Sigmoid colon (tissue), 7 donors: ENCODE measurements at regions of chr5 and their contacts with region 1.

Region 1: DNA sequence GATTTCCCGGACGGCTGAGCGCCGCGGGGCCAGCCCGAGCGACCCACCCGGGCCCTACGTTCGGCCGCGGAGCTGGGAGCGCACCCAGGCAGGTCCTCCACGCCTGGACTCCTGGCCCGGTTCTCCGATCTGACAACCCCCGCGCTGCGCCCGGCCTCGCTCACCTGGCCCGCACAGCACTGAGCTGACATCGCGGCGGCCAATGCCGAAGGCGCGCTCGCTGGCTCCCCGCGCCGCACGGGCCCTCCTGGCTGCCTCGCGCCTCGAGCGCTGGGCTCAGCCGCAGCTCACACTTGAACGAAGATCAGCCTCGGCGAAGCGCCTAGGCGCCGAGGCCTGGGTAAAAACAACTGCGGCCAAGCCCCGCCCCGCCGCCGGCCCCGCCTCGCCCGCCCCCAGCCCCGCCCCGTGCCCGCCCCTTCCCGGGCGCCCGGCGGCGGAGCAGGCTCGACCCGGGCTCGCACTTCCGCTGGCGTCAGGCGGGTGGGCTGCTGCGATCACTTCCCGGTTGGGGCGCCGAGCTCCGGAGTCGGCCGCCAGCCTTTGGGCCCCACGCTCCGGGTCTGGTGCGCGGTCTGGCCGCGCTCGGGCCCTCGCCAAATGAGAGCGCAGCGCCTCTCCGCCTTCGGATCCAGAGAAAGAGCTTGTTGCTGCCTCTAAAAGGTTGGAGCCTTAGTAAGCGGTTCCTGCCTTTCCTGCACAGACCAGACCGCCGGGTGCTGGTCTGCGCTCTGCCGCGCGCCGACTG is at the start of gene SERINC5:
- DNase-seq: peak; percentile 93
- H3K4me3 ChIP-seq: peak within 1 kb of the TSS; percentile 48 to 86 (median 71)
- H3K27ac ChIP-seq: peak within 1 kb of the TSS; percentile 84 to 97 (median 96)
- H3K4me1 ChIP-seq: peaks cover 0 to 48% (median 47%) of the 10 kb centered on the region in 4 donors
- H3K27me3 ChIP-seq: no peaks in the 10 kb centered on the region
- CTCF ChIP-seq: no peak
- EP300 ChIP-seq: peak in 2 of 4 donors; percentile 25 to 32
- POLR2A ChIP-seq: peak; percentile 89 to 93
- total RNA-seq, gene SERINC5: 6.6 to 11.9 (median 9.9) TPM

Region 2: GRCh38 chr5:80093796-80094195 is 162.1 kb before region 1 on chr5:
- intact Hi-C with region 1: loop called (anchors 5 kb)
- DNase-seq: no peak
- H3K4me3 ChIP-seq: no peak overlapping the region
- H3K27ac ChIP-seq: peak overlapping the region in 1 of 4 donors; percentile 42
- H3K4me1 ChIP-seq: peaks cover 0 to 14% (median 2%) of the 10 kb centered on the region in 4 donors
- H3K27me3 ChIP-seq: no peaks in the 10 kb centered on the region
- CTCF ChIP-seq: no peak
- EP300 ChIP-seq: no peak
- POLR2A ChIP-seq: no peak

Region 3: DNA sequence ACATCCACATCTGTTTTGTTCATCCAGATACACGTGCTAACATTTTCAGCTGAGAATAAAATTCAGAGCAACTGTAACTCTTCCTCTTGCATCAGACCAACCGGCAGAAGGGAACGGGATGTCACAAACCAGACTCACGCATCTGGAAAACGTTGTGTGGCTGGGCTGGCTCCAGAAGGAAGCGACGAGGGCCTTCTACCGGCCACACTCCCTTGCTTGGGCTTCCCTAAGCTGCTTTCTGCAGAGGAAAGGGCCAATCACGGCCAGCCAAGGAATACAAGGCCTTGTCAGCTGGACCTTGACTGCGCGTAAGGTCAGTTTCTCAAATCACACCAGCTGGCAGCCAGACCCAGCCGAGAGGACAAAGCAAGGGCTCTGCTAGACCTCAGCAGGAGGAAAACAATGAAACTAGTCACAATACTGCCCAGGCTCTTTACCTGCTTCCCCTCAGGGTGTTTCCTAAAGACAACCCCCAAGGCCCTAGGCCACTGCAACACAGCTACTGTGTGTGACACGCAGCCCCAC is 114.7 kb before region 1 on chr5:
- intact Hi-C with region 1: loop called (anchors 2 kb)
- DNase-seq: peak; percentile 98
- H3K4me3 ChIP-seq: no peak overlapping the region
- H3K27ac ChIP-seq: peak overlapping the region; percentile 69 to 91 (median 88)
- H3K4me1 ChIP-seq: peaks cover 0 to 38% (median 29%) of the 10 kb centered on the region in 4 donors
- H3K27me3 ChIP-seq: no peaks in the 10 kb centered on the region
- CTCF ChIP-seq: no peak
- EP300 ChIP-seq: peak; percentile 18 to 87 (median 46)
- POLR2A ChIP-seq: no peak

Region 4: GRCh38 chr5:80216753-80217596 is 38.9 kb before region 1 on chr5:
- intact Hi-C with region 1: loop called (anchors 5 kb)
- DNase-seq: peak; percentile 89
- H3K4me3 ChIP-seq: peak overlapping the region in 1 of 4 donors; percentile 2
- H3K27ac ChIP-seq: peak overlapping the region in 3 of 4 donors; percentile 47 to 63 (median 58)
- H3K4me1 ChIP-seq: peaks cover 0 to 26% (median 10%) of the 10 kb centered on the region in 4 donors
- H3K27me3 ChIP-seq: no peaks in the 10 kb centered on the region
- CTCF ChIP-seq: no peak
- EP300 ChIP-seq: no peak
- POLR2A ChIP-seq: no peak

Region 5: DNA sequence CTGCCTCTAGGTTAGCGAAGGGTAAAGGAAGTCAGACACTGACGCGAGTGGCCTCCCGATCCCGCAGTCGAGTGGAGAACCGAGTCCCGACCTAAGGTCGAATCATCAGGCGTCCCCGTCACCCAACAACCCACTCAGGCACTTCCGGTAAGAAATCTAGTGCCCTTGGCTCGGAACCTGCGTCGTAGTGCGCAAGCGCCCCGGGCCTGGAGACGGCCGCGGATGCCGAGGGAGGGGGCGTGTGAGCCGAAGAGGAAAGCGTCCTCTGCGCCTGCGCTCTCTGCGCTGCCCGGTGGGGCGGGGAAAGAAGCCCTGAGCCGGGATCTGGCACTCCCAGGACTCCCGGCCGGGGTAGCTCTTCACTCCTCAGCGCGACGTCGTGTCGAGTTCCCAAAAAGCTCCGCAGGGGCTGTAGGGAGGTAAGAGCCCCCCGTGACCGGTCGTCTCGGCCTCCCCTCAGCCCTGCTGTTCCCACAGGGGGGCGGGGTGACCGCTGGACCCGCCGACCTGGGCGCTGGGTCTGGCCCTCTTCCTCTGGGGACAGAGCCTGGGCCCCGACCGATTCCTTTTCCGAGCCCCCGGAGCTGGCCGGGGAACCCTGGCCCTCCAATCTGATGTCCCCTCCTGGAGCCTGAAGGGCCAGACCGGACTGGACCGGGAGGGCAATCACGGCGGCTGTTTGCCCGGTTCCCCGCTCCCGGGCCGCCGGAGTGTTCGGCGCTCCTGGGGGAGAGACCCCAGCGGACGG is 152.0 kb after region 1 on chr5 and contains the start of gene ZFYVE16:
- intact Hi-C with region 1: loop called (anchors 5 kb)
- DNase-seq: peak; percentile 99
- H3K4me3 ChIP-seq: peak within 1 kb of the TSS; percentile 65 to 96 (median 80)
- H3K27ac ChIP-seq: peak within 1 kb of the TSS; percentile 93 to 99 (median 96)
- H3K4me1 ChIP-seq: peaks cover 0 to 39% (median 27%) of the 10 kb centered on the region in 4 donors
- H3K27me3 ChIP-seq: no peaks in the 10 kb centered on the region
- CTCF ChIP-seq: peak; percentile 29 to 73 (median 56)
- EP300 ChIP-seq: peak in 1 of 4 donors; percentile 39
- POLR2A ChIP-seq: peak; percentile 80 to 82
- total RNA-seq, gene ZFYVE16: 29.6 to 43.2 (median 34.4) TPM